Activated CD8-positive, alpha-beta T cell treated with anti-CD3 and anti-CD28 coated beads, Interleukin-2, amount 10 ng/mL, durations not matched to agents 7 days and 5 days (primary cell): ENCODE measurements at regions of chr7 and their contacts with region 1.

Region 1: DNA sequence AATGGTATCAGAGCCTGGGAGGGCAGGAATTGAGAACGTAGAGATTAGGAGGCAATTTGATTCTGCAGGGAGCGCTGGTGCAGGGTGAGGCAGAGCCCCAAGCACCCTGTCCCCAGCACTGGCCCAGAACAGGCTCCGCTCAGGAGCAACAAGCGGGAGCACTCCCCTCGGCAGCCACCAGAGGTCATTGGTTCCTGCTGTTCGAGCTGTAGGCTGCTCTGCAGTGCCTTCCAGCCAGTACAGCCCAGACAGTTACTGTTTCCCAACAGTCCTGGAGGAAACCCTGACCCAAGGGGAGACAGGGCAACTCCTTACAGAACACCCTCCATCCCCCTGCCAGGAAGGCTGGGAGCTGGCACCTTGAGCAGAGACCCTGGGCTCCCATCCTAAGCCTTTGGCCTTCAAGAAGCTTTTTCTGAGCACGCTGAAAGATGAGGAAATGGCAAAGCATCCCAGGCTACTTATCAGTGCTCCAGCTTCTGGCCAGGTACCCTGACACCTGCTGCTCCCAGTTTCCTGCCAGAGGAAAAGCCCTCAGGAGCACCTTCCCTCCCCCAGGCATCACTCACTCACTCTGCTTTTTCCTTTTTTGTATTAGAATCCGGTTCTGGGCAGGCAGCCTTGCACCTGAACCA is 71.2 kb upstream of the EFCAB10 start:
- DNase-seq: peak; percentile 76
- ATAC-seq: peak; percentile 87
- H3K4me3 Mint-ChIP-seq: no peak overlapping the region
- H3K27ac Mint-ChIP-seq: no peak overlapping the region
- H3K4me1 Mint-ChIP-seq: peaks cover 5% of the 10 kb centered on the region
- H3K27me3 Mint-ChIP-seq: no peaks in the 10 kb centered on the region

Region 2: DNA sequence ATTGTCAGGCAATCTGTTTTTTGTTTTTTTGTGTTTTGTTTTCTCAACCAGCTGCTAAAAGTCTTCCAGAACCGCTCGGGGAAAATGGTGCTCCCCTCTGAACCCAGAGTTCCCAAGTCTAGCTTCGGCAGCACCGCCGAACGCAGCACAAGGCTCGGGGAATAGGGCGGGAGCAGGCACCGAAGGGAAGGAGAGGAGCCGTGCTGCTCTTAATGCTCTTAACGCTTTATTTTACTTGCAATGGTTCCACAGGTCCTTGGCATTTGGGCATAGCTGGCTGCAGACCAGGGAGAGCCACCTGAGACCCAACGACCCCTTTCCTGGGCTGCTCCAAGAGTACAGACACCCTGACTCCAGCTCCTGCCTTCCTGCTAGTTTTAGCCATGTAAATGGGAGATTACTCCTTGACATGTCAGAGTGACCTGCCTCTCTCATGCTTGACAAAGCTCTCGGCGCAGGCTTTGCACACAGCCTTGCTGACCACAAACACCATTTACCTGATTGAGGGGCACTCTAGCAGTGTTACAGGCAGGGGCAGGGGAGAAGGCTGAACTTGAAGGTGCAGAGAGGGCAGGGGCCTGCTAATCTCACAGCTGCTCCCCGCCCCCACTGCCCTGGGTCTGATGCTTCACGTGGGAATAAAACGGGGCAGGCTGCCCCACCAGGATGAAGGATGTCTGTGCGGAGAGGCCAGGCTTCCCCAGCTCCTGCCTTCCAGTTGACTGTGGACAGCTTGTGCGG is 12.6 kb before region 1 on chr7:
- CTCF ChIA-PET with region 1: interaction called, 12 read pairs
- POLR2A ChIA-PET with region 1: no interaction called
- DNase-seq: no peak
- ATAC-seq: no peak
- H3K4me3 Mint-ChIP-seq: no peak overlapping the region
- H3K27ac Mint-ChIP-seq: no peak overlapping the region
- H3K4me1 Mint-ChIP-seq: no peaks in the 10 kb centered on the region
- H3K27me3 Mint-ChIP-seq: no peaks in the 10 kb centered on the region

Region 3: GRCh38 chr7:105672801-105673200 is 20.3 kb after region 1 on chr7:
- CTCF ChIA-PET with region 1: interaction called, 43 read pairs
- POLR2A ChIA-PET with region 1: interaction called, 3 read pairs
- DNase-seq: no peak
- ATAC-seq: no peak
- H3K4me3 Mint-ChIP-seq: no peak overlapping the region
- H3K27ac Mint-ChIP-seq: no peak overlapping the region
- H3K4me1 Mint-ChIP-seq: peaks cover 43% of the 10 kb centered on the region
- H3K27me3 Mint-ChIP-seq: no peaks in the 10 kb centered on the region

Region 4: DNA sequence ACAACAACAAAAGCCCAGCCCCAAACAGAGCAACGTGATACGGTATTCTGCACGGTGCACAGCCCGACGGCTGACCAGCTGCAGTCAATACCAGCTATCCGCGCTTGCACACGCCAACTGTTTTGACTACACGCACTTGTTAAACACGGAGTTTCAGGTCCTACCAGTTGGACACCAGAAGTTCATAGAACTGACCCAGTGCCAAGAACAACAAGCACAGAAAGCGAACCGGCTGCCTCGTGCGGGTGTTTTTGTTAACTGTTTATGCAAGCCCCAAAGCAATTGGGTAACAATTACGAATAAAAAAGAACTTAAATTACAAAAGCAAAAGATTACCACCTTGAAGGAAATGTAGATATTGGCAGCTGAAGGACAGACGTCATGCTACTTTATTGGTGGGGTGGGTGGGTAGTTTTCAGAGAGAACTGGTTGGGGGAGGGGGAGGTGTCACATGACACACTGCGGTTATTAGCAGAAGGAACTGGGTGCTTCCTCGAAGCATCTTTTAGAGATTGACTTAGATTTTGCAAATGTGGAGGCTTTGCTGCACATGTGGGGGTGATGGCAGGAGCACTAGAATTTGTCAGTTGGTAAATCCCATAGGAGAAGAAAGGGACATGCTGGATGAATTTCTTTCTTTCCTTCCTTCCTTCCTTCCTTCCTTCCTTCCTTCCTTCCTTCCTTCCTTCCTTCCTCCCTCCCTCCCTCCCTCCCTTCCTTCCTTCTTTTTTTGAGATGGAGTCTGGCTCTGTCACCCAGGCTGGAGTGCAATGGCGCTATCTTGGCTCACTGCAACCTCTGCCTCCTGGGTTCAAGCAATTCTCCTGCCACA is 39.5 kb after region 1 on chr7:
- CTCF ChIA-PET with region 1: interaction called, 12 read pairs
- POLR2A ChIA-PET with region 1: no interaction called
- DNase-seq: peak; percentile 66
- ATAC-seq: peak; percentile 76
- H3K4me3 Mint-ChIP-seq: peak overlapping the region; percentile 80
- H3K27ac Mint-ChIP-seq: peak overlapping the region; percentile 84
- H3K4me1 Mint-ChIP-seq: peaks cover 34% of the 10 kb centered on the region
- H3K27me3 Mint-ChIP-seq: peaks cover 21% of the 10 kb centered on the region

Region 5: DNA sequence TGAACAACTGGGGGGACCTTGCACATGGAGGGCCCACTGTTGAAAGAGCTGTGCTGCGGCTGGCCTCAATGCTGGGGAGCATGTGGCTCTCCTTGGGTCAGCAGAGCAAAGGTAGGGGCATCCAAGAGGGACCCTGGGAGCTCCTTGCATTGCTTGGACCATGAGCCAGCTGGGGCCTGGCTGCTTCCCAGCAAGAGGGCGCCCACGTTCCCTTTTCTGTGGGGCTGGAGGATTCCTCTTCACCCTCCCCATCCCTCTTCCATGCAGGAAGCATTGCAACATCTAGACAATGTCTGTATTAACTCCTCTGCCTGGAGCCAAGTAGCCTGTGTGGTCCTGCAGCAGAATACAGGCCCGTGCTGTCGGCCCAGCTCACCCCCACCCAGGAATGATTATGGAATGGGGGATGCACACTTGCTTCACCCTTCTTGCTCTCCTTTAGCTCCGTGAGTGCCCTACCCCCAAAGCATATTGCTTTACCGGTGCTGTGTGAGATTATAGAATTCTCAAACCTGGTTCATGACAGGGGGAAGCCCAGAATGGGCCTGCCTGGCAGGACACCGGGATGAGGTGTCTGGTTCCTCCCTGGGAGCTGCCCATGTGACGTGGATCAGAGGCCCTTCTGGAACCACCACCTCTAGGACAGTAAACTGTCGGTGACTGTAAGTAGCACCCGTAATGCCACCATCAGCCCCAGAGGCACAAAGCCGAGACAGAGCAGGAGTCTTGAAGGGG is 397.7 kb after region 1 on chr7:
- CTCF ChIA-PET with region 1: interaction called, 11 read pairs
- POLR2A ChIA-PET with region 1: no interaction called
- DNase-seq: no peak
- ATAC-seq: no peak
- H3K4me3 Mint-ChIP-seq: no peak overlapping the region
- H3K27ac Mint-ChIP-seq: no peak overlapping the region
- H3K4me1 Mint-ChIP-seq: no peaks in the 10 kb centered on the region
- H3K27me3 Mint-ChIP-seq: peaks cover 7% of the 10 kb centered on the region